H1 (cell line): ENCODE measurements at regions of chr7 and their contacts with region 1.

Region 1: GRCh38 chr7:138002096-138002827 is 376 bp upstream of the CREB3L2 start:
- DNase-seq: peak; percentile 98
- H3K4me3 ChIP-seq: peak overlapping the region; percentile 87 to 95 (median 92)
- H3K27ac ChIP-seq: no peak overlapping the region
- H3K4me1 ChIP-seq: peaks cover 0 to 11% (median 8%) of the 10 kb centered on the region in 4 experiments; a peak in 5 of 7 replicates
- H3K27me3 ChIP-seq: no peaks in the 10 kb centered on the region
- CTCF ChIP-seq: peak; percentile 68 to 80 (median 74)
- EP300 ChIP-seq: no peak; a peak in 1 of 3 replicates
- POLR2A ChIP-seq: no peak
- RAD21 ChIP-seq: peak; percentile 55 to 65

Region 2: DNA sequence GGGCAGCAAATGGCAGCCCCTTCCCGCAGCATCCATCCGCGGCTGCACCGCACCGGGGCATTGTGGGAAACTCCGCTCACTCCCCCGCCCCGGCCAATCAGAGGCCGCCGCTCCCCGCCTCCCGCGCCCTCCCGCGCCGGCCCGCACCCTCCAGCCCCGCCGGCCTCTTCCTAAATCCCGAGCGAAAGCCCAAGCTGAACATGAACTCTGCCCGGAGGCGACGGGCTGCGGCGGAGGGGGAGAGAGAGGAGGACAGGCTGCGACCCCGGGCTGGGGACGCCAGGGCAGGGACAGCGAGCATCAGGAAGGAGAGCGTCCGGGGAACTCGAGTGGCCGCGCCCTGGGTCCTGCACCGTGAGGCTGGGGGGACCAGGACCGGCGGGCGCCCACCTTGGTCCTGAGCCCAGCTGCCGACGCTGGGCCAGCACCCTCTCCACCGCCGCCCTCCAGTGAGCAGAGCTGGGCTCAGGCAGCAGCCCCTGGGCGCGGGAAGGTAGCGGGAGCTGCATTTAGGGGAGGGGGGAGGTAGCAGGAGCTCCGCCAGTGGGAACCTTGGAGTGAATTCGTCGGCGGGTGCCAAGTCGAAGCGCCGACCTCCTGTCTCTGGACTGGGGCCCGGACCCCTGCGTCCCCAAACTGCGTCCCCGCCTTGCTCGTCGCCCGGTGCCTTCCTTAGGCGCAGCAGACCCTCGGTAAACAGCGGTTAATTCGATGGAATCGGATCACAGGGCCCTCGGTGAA is 155.3 kb before region 1 on chr7 and contains the start of gene DGKI:
- CTCF ChIA-PET with region 1: no interaction called
- POLR2A ChIA-PET with region 1: no interaction called
- DNase-seq: peak in 1 of 2 experiments; percentile 81
- H3K4me3 ChIP-seq: peak within 1 kb of the TSS; percentile 32 to 63 (median 46)
- H3K27ac ChIP-seq: no peak within 1 kb of the TSS
- H3K4me1 ChIP-seq: peaks cover 2 to 10% (median 8%) of the 10 kb centered on the region in 4 experiments; a peak in 6 of 7 replicates
- H3K27me3 ChIP-seq: peaks cover 24 to 46% (median 37%) of the 10 kb centered on the region in 4 experiments
- CTCF ChIP-seq: no peak
- EP300 ChIP-seq: no peak
- POLR2A ChIP-seq: no peak
- RAD21 ChIP-seq: no peak
- total RNA-seq, gene DGKI: 0.71 and 0.84 TPM in 2 replicates

Region 3: GRCh38 chr7:137934941-137935883 is 67.0 kb before region 1 on chr7:
- CTCF ChIA-PET with region 1: interaction called, 12 read pairs
- POLR2A ChIA-PET with region 1: no interaction called
- DNase-seq: no peak
- H3K4me3 ChIP-seq: no peak overlapping the region
- H3K27ac ChIP-seq: no peak overlapping the region
- H3K4me1 ChIP-seq: peaks cover 0 to 22% (median 2%) of the 10 kb centered on the region in 4 experiments; a peak in 3 of 7 replicates
- H3K27me3 ChIP-seq: no peaks in the 10 kb centered on the region
- CTCF ChIP-seq: no peak
- EP300 ChIP-seq: no peak
- POLR2A ChIP-seq: no peak
- RAD21 ChIP-seq: no peak

Region 4: DNA sequence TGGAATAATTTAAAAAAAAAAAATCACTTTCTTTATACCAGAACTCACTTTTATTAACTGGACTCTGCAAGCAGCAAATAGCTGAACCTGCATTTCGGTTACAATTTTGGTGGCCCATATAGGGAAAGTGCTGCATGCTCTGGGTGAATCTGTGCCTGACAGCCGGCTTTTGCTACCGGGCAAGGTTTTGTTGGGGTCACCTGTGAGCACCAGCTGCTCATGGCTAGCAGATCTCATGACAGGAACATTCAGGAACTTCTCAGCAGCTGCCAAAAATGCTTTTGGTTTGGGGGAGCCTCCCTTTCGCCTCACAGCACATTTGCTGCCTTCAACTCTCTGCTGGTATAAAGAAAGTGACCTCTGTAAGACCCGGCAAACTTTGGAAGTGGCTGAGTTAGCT is 12.8 kb after region 1 on chr7:
- CTCF ChIA-PET with region 1: interaction called, 36 read pairs
- POLR2A ChIA-PET with region 1: no interaction called
- DNase-seq: no peak
- H3K4me3 ChIP-seq: no peak overlapping the region
- H3K27ac ChIP-seq: no peak overlapping the region
- H3K4me1 ChIP-seq: peaks cover 0 to 5% (median 4%) of the 10 kb centered on the region in 4 experiments; a peak in 4 of 7 replicates
- H3K27me3 ChIP-seq: no peaks in the 10 kb centered on the region
- CTCF ChIP-seq: no peak
- EP300 ChIP-seq: no peak
- POLR2A ChIP-seq: no peak
- RAD21 ChIP-seq: no peak